AG04450 (cell line): ENCODE measurements at regions of chr15 and their contacts with region 1.

Region 1: DNA sequence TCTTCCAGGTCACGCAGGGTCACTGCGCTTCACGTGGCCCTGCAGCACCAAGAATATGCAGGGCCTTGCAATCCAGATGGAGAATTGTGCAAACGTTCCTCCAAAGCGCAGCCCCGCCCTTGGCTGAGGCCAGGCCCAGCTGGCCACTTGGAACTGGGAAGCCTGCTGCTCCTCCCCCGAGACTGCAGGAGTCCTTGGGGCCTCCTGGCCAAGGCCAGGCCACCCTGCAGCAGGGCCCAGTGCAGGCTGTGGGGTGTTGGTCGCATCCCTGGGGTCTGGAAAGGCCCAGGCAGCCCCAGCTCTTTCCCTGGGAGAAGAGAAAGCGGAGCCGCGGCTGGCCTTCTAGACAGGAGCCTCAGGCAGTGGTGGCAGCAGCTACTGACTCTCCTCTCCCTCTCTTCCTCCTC is 103.7 kb downstream of the TMEM266 start:
- DNase-seq: peak; percentile 68
- H3K4me3 ChIP-seq: no peak overlapping the region
- H3K27ac ChIP-seq: peak overlapping the region; percentile 84
- H3K27me3 ChIP-seq: peaks cover 2% of the 10 kb centered on the region
- CTCF ChIP-seq: no peak

Region 2: GRCh38 chr15:76150971-76151598 is 12.4 kb before region 1 on chr15:
- CTCF ChIA-PET with region 1: interaction called, 20 read pairs
- POLR2A ChIA-PET with region 1: interaction called, 4 read pairs
- DNase-seq: peak; percentile 68
- H3K4me3 ChIP-seq: no peak overlapping the region
- H3K27ac ChIP-seq: peak overlapping the region; percentile 57
- H3K27me3 ChIP-seq: peaks cover 8% of the 10 kb centered on the region
- CTCF ChIP-seq: peak; percentile 89